Right ventricle myocardium inferior (tissue), 1 donor: ENCODE measurements at regions of chr5 and their contacts with region 1.

Region 1: GRCh38 chr5:148826053-148826738 is at the start of gene ADRB2:
- DNase-seq: peak; percentile 99
- ATAC-seq: peak; percentile 97
- total RNA-seq, gene ADRB2: 5.5 TPM

Region 2: DNA sequence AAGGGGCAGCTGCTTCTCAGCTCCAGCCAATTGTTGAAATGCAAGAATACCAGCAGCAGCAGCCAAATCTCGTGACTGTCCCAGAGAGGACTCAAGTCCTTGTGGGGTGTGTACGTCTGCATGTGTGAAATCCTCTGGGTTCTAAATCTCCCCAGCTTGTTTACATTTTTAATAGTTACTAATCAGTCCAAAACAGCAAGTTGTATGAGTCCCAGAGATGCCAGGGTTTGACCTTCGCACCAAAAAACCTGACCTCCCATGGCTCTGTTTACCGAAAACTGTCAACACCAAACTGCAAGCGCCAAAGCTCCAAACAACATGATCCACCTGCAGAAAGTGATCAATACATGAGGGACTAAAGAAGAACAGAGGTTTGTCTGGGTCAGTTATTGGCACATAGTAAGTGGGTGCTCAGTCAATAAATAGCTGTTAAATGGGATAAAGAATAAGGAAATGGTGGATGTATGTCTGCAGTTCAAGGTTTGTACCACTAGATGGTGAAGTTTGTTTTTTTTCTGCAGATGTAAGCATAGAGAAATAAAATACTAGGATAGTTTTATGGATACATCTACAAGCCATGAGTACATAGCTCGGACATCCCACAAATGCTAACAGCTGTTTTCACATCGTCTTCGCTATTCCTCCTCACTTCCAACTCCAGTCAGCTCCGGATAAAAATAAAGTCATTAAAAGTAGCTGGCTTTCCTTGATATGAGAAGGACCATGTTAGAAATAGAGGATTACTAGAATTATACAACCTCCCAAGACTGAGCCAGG is 85.0 kb before region 1 on chr5:
- intact Hi-C with region 1: loop called (anchors 2 kb)
- DNase-seq: no peak
- ATAC-seq: peak; percentile 66

Region 3: GRCh38 chr5:148858106-148858505 is 31.9 kb after region 1 on chr5:
- intact Hi-C with region 1: loop called (anchors 2 kb)
- DNase-seq: no peak
- ATAC-seq: no peak

Region 4: DNA sequence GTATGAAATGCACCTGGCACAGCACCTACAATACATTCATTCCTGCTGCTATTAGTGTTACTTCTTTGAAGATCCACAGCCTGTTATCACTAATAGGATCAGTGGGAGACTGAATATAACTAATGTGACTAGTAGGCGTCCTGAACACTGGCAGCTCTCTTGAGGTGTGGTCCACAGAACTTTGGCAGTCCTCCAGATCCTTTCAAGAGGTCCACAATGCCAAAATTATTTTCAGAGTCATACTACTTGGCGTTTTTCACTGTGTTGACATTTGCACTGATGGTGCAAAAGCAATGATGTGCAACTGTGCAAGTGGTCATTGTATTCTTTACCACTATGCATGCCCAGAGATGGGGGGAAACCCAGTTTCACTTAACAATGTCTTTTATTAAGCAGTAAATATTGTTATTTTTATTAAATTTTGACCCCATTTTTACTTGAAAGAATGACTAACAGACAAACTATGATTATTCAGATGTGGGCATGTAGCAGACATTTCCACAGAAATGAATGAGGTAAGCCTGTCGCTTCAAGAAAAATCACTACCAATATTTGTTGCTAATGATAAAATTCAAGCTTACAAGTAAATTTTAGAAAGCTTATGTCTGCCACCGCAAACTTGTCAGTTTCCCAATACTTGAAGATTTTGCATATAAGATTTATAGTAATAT is 49.1 kb after region 1 on chr5:
- intact Hi-C with region 1: loop called (anchors 2 kb)
- DNase-seq: no peak
- ATAC-seq: peak; percentile 17

Region 5: GRCh38 chr5:148952097-148952867 is 126.1 kb after region 1 on chr5:
- intact Hi-C with region 1: loop called (anchors 2 kb)
- DNase-seq: no peak
- ATAC-seq: no peak

Region 6: GRCh38 chr5:149114403-149115312 is 288.5 kb after region 1 on chr5:
- intact Hi-C with region 1: loop called (anchors 10 kb)
- DNase-seq: no peak
- ATAC-seq: peak; percentile 92